ENCODE measurements at regions of chr14 and their contacts with region 1.

Region 1: GRCh38 chr14:58826845-58827686 is 189.3 kb downstream of the DACT1 start:
- DNase-seq: no peak
- H3K27ac ChIP-seq: no peak overlapping the region
- CTCF ChIP-seq: no peak

Region 2: GRCh38 chr14:59370158-59370742 is 543.2 kb after region 1 on chr14:
- CTCF ChIA-PET with region 1: interaction called, 13 read pairs
- POLR2A ChIA-PET with region 1: no interaction called
- DNase-seq: no peak
- H3K27ac ChIP-seq: no peak overlapping the region
- CTCF ChIP-seq: no peak

Measured in RWPE1 (cell line).